ENCODE measurements at regions of chr5 and their contacts with region 1.

Region 1: GRCh38 chr5:172640822-172641358 is at the start of gene NEURL1B:
- DNase-seq: peak; percentile 56 to 97 (median 68)

Region 2: GRCh38 chr5:172420240-172420943 is 220.5 kb before region 1 on chr5:
- intact Hi-C with region 1: no loop called
- DNase-seq: peak in 6 of 10 donors; percentile 48 to 95 (median 70)

Region 3: DNA sequence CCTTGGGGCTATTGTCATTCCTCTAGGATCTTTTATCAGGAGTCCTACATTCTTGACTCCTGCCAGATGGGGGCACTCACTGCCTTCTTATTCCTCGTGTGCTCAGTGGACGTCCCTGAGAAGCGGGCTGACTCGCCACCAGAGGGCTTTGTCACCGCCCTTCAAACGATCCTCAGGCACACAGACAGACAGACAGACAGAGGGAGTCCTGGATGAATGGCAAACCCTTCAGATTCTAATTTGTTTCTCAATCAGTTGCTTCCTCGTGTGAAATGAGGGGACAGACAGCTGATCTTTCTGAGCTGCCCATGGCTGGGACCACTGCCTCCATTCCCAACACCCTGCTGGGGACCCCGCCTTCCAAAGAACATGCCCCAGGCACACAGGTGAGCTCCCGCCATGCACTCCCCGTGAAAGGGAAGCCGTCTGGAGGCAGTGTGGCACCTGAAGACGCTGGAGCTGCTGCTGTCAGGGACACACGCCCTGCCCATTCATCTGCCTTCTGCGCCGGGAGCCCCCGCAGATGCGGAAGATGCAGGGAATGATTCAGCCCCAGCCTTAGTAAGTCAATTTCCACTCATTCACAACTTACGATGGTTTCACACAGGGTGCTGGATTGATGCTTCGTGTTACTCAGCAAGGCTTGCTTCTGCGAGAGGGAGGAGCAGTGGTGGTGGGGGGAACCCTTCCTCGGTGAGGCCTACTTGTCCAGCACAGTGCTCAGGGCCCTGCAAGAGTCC is 161.7 kb before region 1 on chr5:
- intact Hi-C with region 1: loop called (anchors 2 kb)
- DNase-seq: peak; percentile 58 to 97 (median 82)

Region 4: GRCh38 chr5:173010547-173011464 is 369.9 kb after region 1 on chr5:
- intact Hi-C with region 1: no loop called
- DNase-seq: peak in 6 of 10 donors; percentile 36 to 87 (median 46)

Region 5: GRCh38 chr5:173138707-173139106 is 497.8 kb after region 1 on chr5:
- intact Hi-C with region 1: no loop called
- DNase-seq: no peak